ENCODE measurements at regions of chr9 and their contacts with region 1.

Region 1: GRCh38 chr9:81689343-81690190 is at the start of gene TLE1:
- DNase-seq: peak; percentile 100
- H3K4me3 Mint-ChIP-seq: no peak within 1 kb of the TSS
- H3K27ac Mint-ChIP-seq: peak within 1 kb of the TSS; percentile 82
- H3K4me1 Mint-ChIP-seq: peaks cover 8% of the 10 kb centered on the region
- H3K27me3 Mint-ChIP-seq: no peaks in the 10 kb centered on the region
- CTCF ChIP-seq: no peak
- total RNA-seq, gene TLE1: 21.9 and 26.8 TPM in 2 replicates

Region 2: DNA sequence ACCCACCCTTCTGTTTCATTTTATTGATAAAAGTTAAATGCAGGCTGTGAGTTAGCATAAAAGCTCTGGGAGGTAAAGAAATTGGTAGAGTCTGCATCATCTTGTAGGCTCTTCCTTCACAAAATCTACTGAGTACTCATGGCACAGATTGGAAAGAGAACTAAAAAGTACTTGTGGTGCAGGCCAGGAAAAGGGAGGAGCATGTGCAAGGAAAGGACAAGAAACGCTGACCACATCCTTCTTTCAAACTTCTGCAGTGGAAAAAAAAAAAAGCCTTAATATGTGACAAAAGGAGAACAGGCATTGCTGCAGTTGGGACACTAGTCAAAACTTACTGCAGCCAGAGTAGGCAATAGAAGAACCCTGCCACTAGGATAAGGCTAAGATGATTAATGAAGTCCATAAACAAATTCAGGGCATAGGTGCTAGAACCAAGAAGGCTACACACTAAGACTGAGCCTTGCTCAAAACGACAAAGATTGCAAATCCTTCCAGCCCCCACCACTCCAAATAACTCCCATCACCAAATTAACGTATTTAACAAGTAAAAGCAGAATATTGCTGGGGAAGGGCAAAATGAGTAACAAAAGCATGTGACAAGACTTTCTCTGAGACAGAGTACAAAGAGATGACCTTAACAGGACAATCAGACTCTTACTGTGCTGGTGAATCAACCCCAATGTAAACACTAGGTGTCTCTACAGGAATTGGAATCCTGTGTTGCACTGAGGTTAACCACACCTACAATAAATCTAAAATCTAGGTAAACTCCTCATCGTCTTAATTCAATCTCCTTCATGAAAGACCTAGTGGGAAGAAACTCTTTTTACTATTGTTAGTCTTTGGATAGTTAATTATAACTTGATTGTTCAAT is 1025.0 kb before region 1 on chr9:
- CTCF ChIA-PET with region 1: no interaction called
- POLR2A ChIA-PET with region 1: no interaction called
- intact Hi-C with region 1: loop called (anchors 2 kb)
- DNase-seq: peak; percentile 48
- H3K4me3 Mint-ChIP-seq: no peak overlapping the region
- H3K27ac Mint-ChIP-seq: no peak overlapping the region
- H3K4me1 Mint-ChIP-seq: peaks cover 5% of the 10 kb centered on the region
- H3K27me3 Mint-ChIP-seq: no peaks in the 10 kb centered on the region
- CTCF ChIP-seq: peak; percentile 37

Region 3: GRCh38 chr9:81312337-81312736 is 377.2 kb before region 1 on chr9:
- CTCF ChIA-PET with region 1: no interaction called
- POLR2A ChIA-PET with region 1: no interaction called
- intact Hi-C with region 1: loop called (anchors 2 kb)
- DNase-seq: peak; percentile 1
- H3K4me3 Mint-ChIP-seq: no peak overlapping the region
- H3K27ac Mint-ChIP-seq: no peak overlapping the region
- H3K4me1 Mint-ChIP-seq: no peaks in the 10 kb centered on the region
- H3K27me3 Mint-ChIP-seq: no peaks in the 10 kb centered on the region
- CTCF ChIP-seq: peak; percentile 18

Region 4: GRCh38 chr9:81588148-81588871 is 101.3 kb before region 1 on chr9:
- CTCF ChIA-PET with region 1: no interaction called
- POLR2A ChIA-PET with region 1: no interaction called
- intact Hi-C with region 1: loop called (anchors 5 kb)
- DNase-seq: peak; percentile 91
- H3K4me3 Mint-ChIP-seq: peak overlapping the region; percentile 66
- H3K27ac Mint-ChIP-seq: peak overlapping the region; percentile 98
- H3K4me1 Mint-ChIP-seq: peaks cover 25% of the 10 kb centered on the region
- H3K27me3 Mint-ChIP-seq: no peaks in the 10 kb centered on the region
- CTCF ChIP-seq: no peak

Region 5: GRCh38 chr9:81759668-81760215 is 70.2 kb after region 1 on chr9:
- CTCF ChIA-PET with region 1: no interaction called
- POLR2A ChIA-PET with region 1: no interaction called
- intact Hi-C with region 1: no loop called
- DNase-seq: peak; percentile 62
- H3K4me3 Mint-ChIP-seq: no peak overlapping the region
- H3K27ac Mint-ChIP-seq: peak overlapping the region; percentile 27
- H3K4me1 Mint-ChIP-seq: no peaks in the 10 kb centered on the region
- H3K27me3 Mint-ChIP-seq: no peaks in the 10 kb centered on the region
- CTCF ChIP-seq: no peak

Region 6: GRCh38 chr9:81848472-81848871 is 158.9 kb after region 1 on chr9:
- CTCF ChIA-PET with region 1: interaction called, 6 read pairs
- POLR2A ChIA-PET with region 1: interaction called, 8 read pairs
- intact Hi-C with region 1: loop called (anchors 2 kb)
- DNase-seq: peak; percentile 35
- H3K4me3 Mint-ChIP-seq: no peak overlapping the region
- H3K27ac Mint-ChIP-seq: no peak overlapping the region
- H3K4me1 Mint-ChIP-seq: no peaks in the 10 kb centered on the region
- H3K27me3 Mint-ChIP-seq: no peaks in the 10 kb centered on the region
- CTCF ChIP-seq: peak; percentile 26

Region 7: GRCh38 chr9:82961504-82962125 is 1272.0 kb after region 1 on chr9:
- CTCF ChIA-PET with region 1: no interaction called
- POLR2A ChIA-PET with region 1: interaction called, 4 read pairs
- intact Hi-C with region 1: loop called (anchors 2 kb)
- DNase-seq: peak; percentile 90
- H3K4me3 Mint-ChIP-seq: no peak overlapping the region
- H3K27ac Mint-ChIP-seq: no peak overlapping the region
- H3K4me1 Mint-ChIP-seq: no peaks in the 10 kb centered on the region
- H3K27me3 Mint-ChIP-seq: no peaks in the 10 kb centered on the region
- CTCF ChIP-seq: peak; percentile 74